Activated CD4-positive, alpha-beta T cell treated with anti-CD3 and anti-CD28 coated beads, Interleukin-2, amount 10 ng/mL, durations not matched to agents 24 days and 14 days (primary cell): ENCODE measurements at regions of chr19 and their contacts with region 1.

Region 1: DNA sequence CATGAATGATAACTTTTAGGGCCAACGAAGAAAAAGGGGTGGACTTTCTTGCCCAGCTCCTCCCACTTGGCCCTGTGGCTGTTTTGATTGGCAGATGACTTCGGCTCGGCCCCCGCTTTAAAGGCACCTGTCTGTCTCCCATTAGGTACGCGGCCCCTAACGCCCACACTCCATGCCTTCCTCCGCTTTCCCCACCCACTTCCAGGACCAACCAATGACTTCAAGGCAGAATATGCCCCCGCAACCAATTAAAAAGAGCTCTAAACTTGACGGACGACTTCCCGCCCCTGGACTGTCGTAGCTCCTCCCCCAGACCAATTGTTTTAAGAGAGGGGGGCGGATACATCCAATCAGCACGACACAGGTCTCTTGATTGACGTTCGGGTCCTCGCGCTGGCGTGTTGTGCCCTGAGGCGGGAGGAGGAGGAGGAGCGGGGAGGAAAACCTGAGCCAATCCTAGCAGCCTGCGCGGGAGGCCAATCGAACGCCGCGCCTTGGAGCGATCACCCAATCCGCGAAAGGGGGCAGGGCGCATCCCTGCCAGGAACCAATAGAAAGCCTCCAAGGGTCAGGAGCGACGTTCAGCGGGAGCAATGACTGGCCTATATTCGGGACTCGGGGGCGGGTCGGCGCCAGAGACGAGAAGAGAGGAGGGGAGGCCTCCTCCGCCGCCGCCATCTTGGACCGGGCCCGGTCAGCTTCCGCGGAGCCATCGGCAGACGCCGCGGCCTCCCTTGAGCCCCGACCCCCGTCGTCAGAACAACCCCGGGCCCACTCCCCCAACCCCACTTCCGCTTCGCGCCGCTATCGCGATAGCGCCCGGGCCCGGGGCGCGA is at the start of gene CNOT3:
- DNase-seq: peak; percentile 100
- H3K4me3 Mint-ChIP-seq: peak within 1 kb of the TSS; percentile 85
- H3K27ac Mint-ChIP-seq: peak within 1 kb of the TSS; percentile 95
- H3K4me1 Mint-ChIP-seq: peaks cover 42% of the 10 kb centered on the region
- H3K27me3 Mint-ChIP-seq: no peaks in the 10 kb centered on the region
- total RNA-seq, gene CNOT3: 64.5 and 73.4 TPM in 2 replicates

Region 2: DNA sequence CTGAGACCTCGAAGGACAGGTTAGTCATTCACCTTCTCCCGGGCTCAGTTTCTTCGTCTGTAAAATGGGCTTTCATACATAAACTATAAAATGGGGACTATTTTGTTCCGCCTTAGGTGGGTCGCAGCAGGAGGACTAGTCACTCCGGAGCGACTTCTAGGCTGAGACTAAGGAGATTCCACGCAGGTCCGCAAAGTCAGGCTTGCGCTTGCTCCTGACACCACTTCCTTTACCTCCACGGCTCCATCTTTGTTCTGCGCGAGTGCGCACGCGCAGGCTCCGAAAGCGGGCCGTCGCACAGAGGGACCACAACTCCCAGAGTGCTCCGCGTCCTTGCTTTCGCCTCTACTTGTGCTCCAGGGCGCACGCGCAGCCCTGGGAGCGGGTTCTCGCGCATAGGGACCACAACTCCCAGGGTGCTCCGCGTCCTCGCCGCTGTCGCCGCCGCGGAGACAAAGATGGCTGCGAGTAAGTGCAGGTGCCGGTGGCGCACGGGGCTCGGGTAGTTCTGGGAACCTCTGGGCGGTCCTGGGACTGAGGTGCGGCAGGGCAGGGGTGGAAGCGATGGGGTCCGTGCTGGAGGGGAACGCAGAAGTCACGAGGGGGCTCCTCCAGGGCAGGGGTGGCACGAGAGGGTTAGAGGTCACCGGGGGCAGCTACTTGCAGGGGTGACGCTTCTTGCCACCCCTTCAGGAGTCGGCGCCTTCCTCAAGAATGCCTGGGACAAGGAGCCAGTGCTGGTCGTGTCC is 34.7 kb before region 1 on chr19 and contains the start of gene NDUFA3:
- intact Hi-C with region 1: loop called (anchors 1 kb)
- DNase-seq: peak; percentile 99
- H3K4me3 Mint-ChIP-seq: peak within 1 kb of the TSS; percentile 99
- H3K27ac Mint-ChIP-seq: peak within 1 kb of the TSS; percentile 97
- H3K4me1 Mint-ChIP-seq: peaks cover 22% of the 10 kb centered on the region
- H3K27me3 Mint-ChIP-seq: no peaks in the 10 kb centered on the region
- total RNA-seq, gene NDUFA3: 105 and 131 TPM in 2 replicates

Region 3: GRCh38 chr19:54115109-54116063 is 21.9 kb before region 1 on chr19 and contains the starts of genes PRPF31 and TFPT:
- intact Hi-C with region 1: loop called (anchors 1 kb)
- DNase-seq: peak; percentile 99
- H3K4me3 Mint-ChIP-seq: peak within 1 kb of the TSS; percentile 89
- H3K27ac Mint-ChIP-seq: peak within 1 kb of the TSS; percentile 87
- H3K4me1 Mint-ChIP-seq: peaks cover 24% of the 10 kb centered on the region
- H3K27me3 Mint-ChIP-seq: peaks cover 2% of the 10 kb centered on the region
- total RNA-seq, gene PRPF31: 110 and 115 TPM in 2 replicates
- total RNA-seq, gene TFPT: 31.0 and 33.7 TPM in 2 replicates

Region 4: DNA sequence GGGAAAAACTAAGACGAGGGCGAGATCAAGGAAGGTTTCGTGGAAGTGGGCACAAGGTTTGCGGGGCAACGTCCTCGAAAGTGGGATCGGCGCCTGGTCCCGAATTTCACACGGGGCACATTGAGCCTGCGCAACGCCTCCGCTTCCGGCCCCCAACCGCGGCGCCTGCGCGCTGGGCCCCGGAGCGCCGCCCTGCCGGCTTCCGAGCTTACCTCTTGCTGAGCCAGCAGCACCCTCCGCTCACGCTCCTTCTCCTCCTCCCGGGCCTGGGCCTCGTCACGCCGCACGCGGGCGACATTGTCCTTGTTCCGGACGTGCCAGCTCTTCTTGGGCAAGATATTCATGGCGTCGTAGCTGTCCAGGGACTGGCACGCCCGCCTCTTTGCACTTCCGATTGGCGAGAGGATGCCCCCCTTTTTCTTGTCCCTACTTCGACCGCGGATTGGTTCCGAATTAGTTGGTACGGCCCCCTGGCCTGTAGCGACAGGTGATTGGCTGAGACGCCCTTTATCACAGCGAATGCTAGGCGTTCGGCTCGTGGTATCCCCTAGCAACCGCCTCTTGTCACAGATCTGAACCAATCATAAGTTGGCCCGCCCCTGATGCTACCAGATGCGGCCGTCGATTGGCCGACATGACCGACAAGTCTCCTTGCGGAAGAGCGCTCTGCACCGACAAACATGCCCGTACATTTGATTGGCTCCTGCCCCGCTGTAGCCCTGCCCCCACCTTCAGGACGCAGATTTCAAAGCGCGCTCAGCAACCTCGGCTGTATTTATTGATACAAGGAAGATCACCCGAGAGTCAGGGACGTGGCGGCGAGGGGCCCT is 22.3 kb after region 1 on chr19 and contains the start of gene LENG1:
- intact Hi-C with region 1: loop called (anchors 1 kb)
- DNase-seq: peak; percentile 99
- H3K4me3 Mint-ChIP-seq: peak within 1 kb of the TSS; percentile 91
- H3K27ac Mint-ChIP-seq: peak within 1 kb of the TSS; percentile 99
- H3K4me1 Mint-ChIP-seq: peaks cover 49% of the 10 kb centered on the region
- H3K27me3 Mint-ChIP-seq: no peaks in the 10 kb centered on the region
- total RNA-seq, gene LENG1: 4.6 and 5.7 TPM in 2 replicates

Region 5: DNA sequence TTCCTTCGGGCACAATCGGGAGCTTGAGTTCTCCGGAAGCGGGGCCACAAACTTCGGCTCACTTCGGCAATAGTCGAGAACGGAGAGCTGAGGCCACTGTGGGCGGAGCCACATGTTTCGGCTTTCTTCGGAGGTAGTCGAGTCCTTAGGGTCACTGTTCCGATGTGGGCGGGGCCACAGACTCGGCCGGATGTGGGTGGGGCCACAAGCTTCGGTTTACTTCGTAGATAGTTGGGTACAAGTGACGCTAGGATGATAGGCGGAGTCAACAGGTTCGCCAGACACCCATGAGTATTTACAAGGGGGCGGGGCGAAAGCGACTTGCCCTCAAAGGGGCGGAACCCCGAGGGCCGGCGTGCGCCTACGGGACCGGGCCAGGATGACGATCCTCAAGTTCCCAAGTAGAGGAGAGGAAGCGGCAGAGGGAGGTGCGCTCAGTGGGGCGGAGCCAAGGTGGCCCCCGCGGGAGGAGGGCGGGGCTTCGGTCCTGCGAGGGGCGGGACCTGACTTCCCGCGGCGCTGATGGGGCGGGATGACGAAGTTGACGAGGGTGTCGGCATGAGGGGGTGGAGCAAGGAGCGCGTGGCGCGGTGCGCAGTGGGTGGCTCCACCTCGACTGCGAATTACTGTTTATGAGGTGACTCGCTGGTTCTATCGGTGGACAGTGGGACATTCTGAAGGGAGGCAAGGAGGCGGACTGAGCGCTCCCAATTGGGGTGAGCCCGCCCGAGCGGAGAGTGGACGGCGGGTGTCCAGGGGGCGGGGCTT is 52.6 kb after region 1 on chr19:
- intact Hi-C with region 1: loop called (anchors 1 kb)
- DNase-seq: peak; percentile 100
- H3K4me3 Mint-ChIP-seq: peak overlapping the region; percentile 85
- H3K27ac Mint-ChIP-seq: peak overlapping the region; percentile 98
- H3K4me1 Mint-ChIP-seq: peaks cover 28% of the 10 kb centered on the region
- H3K27me3 Mint-ChIP-seq: no peaks in the 10 kb centered on the region

Region 6: DNA sequence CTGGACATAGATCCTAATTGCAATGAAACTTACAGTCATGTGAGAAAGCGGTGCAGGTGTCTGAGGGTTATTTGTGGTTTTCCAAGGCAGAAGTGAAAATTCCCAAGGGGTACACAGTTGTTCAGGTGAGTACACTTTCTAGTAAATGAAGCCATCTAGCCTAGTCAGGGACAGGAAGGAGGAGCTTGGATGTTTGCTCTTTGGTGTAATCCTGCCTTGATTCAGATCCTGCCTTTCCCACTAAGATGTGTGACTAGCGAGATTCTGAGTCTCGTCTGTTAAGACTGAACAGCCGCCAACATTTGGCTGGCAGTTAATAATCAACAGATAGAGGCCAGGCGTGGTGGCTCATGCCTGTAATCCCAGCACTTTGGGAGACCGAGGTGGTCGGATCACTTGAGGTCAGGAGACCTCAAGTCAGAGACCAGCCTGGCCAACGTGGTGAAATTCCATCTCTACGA is 65.9 kb after region 1 on chr19:
- intact Hi-C with region 1: loop called (anchors 1 kb)
- DNase-seq: no peak
- H3K4me3 Mint-ChIP-seq: peak overlapping the region; percentile 95
- H3K27ac Mint-ChIP-seq: peak overlapping the region; percentile 74
- H3K4me1 Mint-ChIP-seq: peaks cover 67% of the 10 kb centered on the region
- H3K27me3 Mint-ChIP-seq: no peaks in the 10 kb centered on the region

Region 7: DNA sequence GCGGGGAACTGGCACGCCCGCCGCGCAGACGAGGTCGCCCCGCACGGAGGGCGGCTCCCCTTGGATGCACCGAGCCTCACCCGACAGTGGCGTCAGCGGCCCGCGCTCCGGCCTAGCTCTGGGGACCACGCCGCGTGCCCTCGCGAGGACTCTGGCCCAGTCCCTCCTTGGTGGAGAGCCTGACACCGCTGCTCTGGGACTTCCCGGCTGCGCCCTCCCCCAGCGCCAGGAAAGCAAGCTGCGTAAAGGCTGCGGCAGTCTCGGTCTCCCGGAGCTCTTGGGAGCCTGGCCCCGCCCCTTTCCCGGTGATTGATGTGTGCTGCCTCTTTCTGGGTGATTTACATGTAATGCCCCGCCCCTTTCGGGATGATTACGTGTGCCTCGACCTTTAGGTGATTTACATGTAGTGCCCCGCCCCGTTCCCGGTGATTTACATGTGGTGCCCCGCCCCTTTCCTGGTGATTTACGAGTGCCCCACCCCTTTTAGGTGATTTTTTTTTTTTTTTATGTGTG is 326.3 kb after region 1 on chr19 and contains the start of gene LENG9:
- intact Hi-C with region 1: loop called (anchors 1 kb)
- DNase-seq: peak; percentile 99
- H3K4me3 Mint-ChIP-seq: peak within 1 kb of the TSS; percentile 87
- H3K27ac Mint-ChIP-seq: peak within 1 kb of the TSS; percentile 90
- H3K4me1 Mint-ChIP-seq: peaks cover 26% of the 10 kb centered on the region
- H3K27me3 Mint-ChIP-seq: peaks cover 16% of the 10 kb centered on the region
- total RNA-seq, gene LENG9: 8.2 and 8.3 TPM in 2 replicates